ENCODE measurements at regions of chr5 and their contacts with region 1.

Region 1: DNA sequence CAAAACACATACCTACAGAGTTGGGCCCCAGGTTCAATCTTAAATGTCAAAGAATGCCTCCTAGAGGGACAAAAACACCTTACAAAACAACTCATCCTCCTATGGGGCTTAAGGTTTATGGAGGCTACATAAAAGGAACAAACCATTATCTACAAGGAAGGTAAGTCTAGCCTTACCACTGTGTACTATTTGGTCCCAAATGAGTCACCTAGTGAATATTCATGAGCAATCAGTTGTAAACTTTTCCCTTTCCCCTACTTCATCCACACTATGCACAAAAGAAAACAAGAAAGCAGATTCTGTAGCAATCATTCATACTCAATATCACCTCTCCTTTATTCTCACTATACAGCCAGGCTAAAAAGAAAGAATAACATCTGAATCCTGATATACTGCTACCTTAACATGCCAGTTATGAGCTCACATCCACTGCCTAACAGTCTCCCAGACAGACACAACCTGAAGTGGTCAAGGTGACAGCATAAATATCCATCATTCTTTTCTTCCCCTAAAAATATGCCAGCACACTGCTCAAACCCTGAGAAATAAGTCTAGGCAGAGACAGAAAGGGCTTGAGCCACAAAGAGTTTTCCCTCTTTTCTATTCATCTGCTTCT is 6.2 kb downstream of the OXCT1 start:
- DNase-seq: no peak
- H3K4me3 Mint-ChIP-seq: no peak overlapping the region
- H3K27ac Mint-ChIP-seq: peak overlapping the region; percentile 24
- H3K4me1 Mint-ChIP-seq: peaks cover 7% of the 10 kb centered on the region
- H3K27me3 Mint-ChIP-seq: no peaks in the 10 kb centered on the region
- CTCF ChIP-seq: no peak

Region 2: DNA sequence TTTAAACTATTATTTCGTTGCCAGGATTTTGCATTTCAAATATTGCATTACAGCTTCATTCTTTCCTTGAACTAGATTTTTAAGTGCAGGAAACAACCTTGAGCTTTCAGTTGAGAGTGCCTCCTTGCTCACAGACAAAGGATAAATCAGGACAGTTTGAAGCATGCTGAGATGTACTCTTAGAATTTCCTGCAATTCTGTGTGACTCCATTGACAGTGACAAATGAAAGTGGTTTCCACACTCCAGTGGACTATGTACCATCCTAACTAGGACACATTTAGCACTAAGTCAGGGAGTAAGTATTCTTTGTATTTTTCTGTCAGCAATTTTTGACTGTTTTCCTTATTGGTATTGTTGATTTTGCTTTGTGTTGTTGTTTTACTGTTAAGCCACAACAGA is 253.6 kb before region 1 on chr5:
- CTCF ChIA-PET with region 1: no interaction called
- intact Hi-C with region 1: no loop called
- DNase-seq: no peak
- H3K4me3 Mint-ChIP-seq: no peak overlapping the region
- H3K27ac Mint-ChIP-seq: no peak overlapping the region
- H3K4me1 Mint-ChIP-seq: no peaks in the 10 kb centered on the region
- H3K27me3 Mint-ChIP-seq: no peaks in the 10 kb centered on the region
- CTCF ChIP-seq: no peak

Region 3: DNA sequence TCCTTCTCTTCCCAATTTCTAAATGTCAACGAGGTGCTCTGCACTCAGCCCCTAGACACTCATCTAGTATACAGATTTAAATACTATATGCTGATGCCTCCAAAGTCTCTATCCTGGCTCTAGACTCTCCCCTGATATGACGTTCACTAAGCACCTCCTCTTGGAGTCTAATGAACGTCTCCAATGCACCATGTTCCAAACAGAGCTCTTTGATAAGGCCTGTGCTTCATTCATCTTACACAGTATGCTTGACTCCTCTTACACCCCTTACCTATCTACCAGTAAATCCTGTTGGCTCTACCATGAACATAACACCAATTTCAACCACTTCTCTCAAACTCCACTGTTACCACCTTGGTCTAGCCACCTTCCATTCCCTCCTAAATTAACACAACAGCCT is 19.5 kb before region 1 on chr5:
- CTCF ChIA-PET with region 1: no interaction called
- intact Hi-C with region 1: no loop called
- DNase-seq: no peak
- H3K4me3 Mint-ChIP-seq: no peak overlapping the region
- H3K27ac Mint-ChIP-seq: no peak overlapping the region
- H3K4me1 Mint-ChIP-seq: peaks cover 8% of the 10 kb centered on the region
- H3K27me3 Mint-ChIP-seq: no peaks in the 10 kb centered on the region
- CTCF ChIP-seq: no peak

Region 4: DNA sequence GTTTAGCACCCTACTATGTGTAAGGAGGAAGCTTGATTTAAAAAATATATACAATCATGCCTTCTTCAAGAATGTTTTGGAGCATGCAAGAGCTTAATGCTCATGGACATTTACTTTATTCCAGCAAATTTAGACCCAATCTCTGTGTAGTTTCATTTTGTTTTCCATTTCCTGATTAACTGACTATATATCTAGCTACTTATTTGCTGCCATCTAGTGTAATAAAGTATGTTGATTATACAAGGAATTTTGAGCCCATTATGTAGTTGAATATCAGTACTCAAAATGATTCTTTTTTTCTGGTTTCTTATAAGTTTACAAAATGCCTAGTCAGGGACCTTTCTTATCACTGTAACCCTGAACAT is 792.7 kb after region 1 on chr5:
- CTCF ChIA-PET with region 1: no interaction called
- intact Hi-C with region 1: loop called (anchors 5 kb)
- DNase-seq: no peak
- H3K4me3 Mint-ChIP-seq: no peak overlapping the region
- H3K27ac Mint-ChIP-seq: no peak overlapping the region
- H3K4me1 Mint-ChIP-seq: no peaks in the 10 kb centered on the region
- H3K27me3 Mint-ChIP-seq: peaks cover 45% of the 10 kb centered on the region
- CTCF ChIP-seq: no peak

Measured in Calu3 (cell line).